WTC11 (cell line): ENCODE measurements at regions of chr15 and their contacts with region 1.

Region 1: GRCh38 chr15:80058851-80059785 is at the start of gene ZFAND6:
- DNase-seq: peak; percentile 98
- ATAC-seq: peak; percentile 92
- H3K4me3 Mint-ChIP-seq: peak within 1 kb of the TSS; percentile 89
- H3K27ac Mint-ChIP-seq: peak within 1 kb of the TSS; percentile 99
- H3K4me1 Mint-ChIP-seq: peaks cover 39% of the 10 kb centered on the region
- H3K27me3 Mint-ChIP-seq: no peaks in the 10 kb centered on the region
- CTCF ChIP-seq: no peak
- total RNA-seq, gene ZFAND6: 108 to 119 TPM (median 114 TPM) in 3 replicates

Region 2: DNA sequence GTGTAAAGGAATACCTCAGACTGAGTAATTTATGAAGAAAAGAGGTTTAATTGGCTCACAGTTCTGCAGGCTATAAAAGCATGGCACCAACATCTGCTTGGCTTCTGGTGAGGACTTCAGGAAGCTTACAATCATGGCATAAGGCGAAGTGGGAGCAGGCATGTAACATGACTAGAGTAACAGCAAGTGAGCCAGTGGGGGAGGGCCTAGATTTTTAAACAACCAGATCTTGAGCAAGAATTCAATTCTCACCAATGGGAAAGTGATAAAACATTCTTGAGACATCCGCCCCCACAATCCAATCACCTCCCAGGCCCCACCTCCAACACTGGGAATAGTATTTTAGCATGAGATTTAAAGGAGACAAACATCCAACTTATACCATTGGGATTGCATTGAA is 44.0 kb before region 1 on chr15:
- CTCF ChIA-PET with region 1: no interaction called
- POLR2A ChIA-PET with region 1: no interaction called
- DNase-seq: no peak
- ATAC-seq: no peak
- H3K4me3 Mint-ChIP-seq: no peak overlapping the region
- H3K27ac Mint-ChIP-seq: no peak overlapping the region
- H3K4me1 Mint-ChIP-seq: no peaks in the 10 kb centered on the region
- H3K27me3 Mint-ChIP-seq: no peaks in the 10 kb centered on the region
- CTCF ChIP-seq: no peak

Region 3: GRCh38 chr15:80121546-80121945 is 62.4 kb after region 1 on chr15:
- CTCF ChIA-PET with region 1: no interaction called
- POLR2A ChIA-PET with region 1: no interaction called
- DNase-seq: no peak
- ATAC-seq: no peak
- H3K4me3 Mint-ChIP-seq: no peak overlapping the region
- H3K27ac Mint-ChIP-seq: no peak overlapping the region
- H3K4me1 Mint-ChIP-seq: 0 out of 2 replicates have a peak, but pooled peaks cover 4% of the 10 kb centered on the region
- H3K27me3 Mint-ChIP-seq: no peaks in the 10 kb centered on the region
- CTCF ChIP-seq: no peak

Region 4: DNA sequence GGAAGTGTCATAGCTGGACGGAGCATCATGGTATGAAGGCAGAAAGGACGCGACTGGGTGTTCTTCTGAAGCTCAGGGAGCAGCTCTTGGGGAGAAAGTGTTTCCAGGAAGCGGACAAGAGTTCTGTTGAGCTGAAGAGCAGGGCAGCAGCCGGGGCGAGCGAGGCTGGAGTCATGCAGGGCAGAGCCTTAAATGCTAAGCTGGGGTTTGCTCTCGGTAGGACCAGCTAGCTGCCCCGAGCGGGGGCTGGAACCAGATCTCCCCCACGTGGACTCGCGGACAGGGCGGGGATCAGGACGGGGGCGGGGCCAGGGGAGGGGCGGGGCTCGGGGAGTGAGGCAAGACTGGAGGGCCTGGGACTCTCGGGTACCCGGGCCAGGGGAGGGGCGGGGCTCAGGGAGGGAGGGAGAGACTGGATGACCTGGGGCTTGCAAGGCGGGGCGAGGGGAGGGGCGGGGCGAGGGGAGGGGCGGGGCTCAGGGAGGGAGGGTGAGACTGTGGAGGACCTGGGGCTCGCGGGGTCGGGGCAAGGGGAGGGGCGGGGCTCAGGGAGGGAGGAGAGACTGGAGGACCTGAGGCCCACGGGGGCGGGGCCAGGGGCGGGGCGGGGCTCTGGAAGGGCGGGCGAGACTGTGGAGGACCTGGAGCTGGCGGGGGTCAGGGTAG is 93.2 kb after region 1 on chr15:
- CTCF ChIA-PET with region 1: interaction called, 11 read pairs
- POLR2A ChIA-PET with region 1: interaction called, 17 read pairs
- DNase-seq: peak; percentile 97
- ATAC-seq: peak; percentile 82
- H3K4me3 Mint-ChIP-seq: peak overlapping the region; percentile 78
- H3K27ac Mint-ChIP-seq: peak overlapping the region; percentile 74; the same call in 1 of the 2 replicates
- H3K4me1 Mint-ChIP-seq: peaks cover 30% of the 10 kb centered on the region
- H3K27me3 Mint-ChIP-seq: peaks cover 10% of the 10 kb centered on the region
- CTCF ChIP-seq: no peak

Region 5: GRCh38 chr15:80418892-80419537 is 359.9 kb after region 1 on chr15:
- CTCF ChIA-PET with region 1: no interaction called
- POLR2A ChIA-PET with region 1: no interaction called
- DNase-seq: no peak
- ATAC-seq: peak; percentile 70
- H3K4me3 Mint-ChIP-seq: no peak overlapping the region
- H3K27ac Mint-ChIP-seq: no peak overlapping the region
- H3K4me1 Mint-ChIP-seq: peaks cover 6% of the 10 kb centered on the region; the same call in 1 of the 2 replicates
- H3K27me3 Mint-ChIP-seq: no peaks in the 10 kb centered on the region; the same call in 1 of the 2 replicates
- CTCF ChIP-seq: peak; percentile 29; the same call in 1 of the 2 replicates